Panc1 (cell line): ENCODE measurements at regions of chr7 and their contacts with region 1.

Region 1: DNA sequence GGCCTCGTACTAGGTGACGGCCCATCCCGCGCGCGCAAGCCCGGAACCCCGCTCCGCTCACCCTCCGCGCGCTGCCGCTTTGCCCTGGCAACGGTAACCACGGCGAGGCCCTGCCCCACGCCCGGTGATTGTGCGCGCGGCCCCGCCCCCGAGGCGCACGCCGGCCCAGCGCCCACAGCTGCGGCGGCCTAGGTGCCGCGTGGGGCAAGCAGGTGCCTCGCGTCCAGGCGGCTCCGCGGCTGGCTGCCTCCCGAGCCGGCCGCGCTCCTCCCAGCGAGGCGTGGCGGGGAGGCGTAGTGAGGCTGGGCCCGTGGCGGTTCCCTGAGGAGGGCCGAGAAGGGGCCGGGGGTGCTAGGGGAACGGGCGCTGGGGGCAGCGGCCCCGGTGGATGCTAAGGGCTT is at the start of gene SMKR1:
- DNase-seq: no peak
- ATAC-seq: peak; percentile 85
- H3K4me3 ChIP-seq: peak within 1 kb of the TSS; percentile 55 to 61
- H3K27ac ChIP-seq: no peak within 1 kb of the TSS
- H3K4me1 ChIP-seq: no peaks in the 10 kb centered on the region
- H3K27me3 ChIP-seq: no peaks in the 10 kb centered on the region
- CTCF ChIP-seq: no peak
- total RNA-seq, gene SMKR1: 1.4 TPM

Region 2: DNA sequence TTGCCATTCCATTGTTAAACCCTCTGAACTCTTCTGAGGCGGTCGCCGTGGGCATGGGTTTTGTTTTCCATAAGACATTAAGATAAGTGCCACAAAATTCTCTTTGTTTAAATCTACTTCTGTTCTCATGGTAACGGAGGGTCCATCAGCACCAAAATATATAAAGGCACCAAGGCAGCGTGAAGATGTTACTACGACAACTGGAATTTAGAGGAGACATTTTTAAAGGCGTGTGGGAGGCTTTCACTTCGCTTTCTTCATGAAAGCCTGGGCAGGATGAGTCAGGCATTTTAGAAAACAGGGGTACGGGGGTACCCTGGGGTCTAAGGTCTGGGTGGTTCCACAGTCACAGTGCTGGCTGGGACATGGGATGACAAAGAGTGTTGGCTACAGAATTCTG is 33.9 kb after region 1 on chr7:
- CTCF ChIA-PET with region 1: interaction called, 11 read pairs
- POLR2A ChIA-PET with region 1: interaction called, 15 read pairs
- in situ Hi-C with region 1: no loop called
- intact Hi-C with region 1: no loop called
- DNase-seq: no peak
- ATAC-seq: no peak
- H3K4me3 ChIP-seq: no peak overlapping the region
- H3K27ac ChIP-seq: no peak overlapping the region
- H3K4me1 ChIP-seq: no peaks in the 10 kb centered on the region
- H3K27me3 ChIP-seq: no peaks in the 10 kb centered on the region
- CTCF ChIP-seq: no peak

Region 3: GRCh38 chr7:129864042-129864441 is 361.7 kb after region 1 on chr7:
- CTCF ChIA-PET with region 1: no interaction called
- POLR2A ChIA-PET with region 1: interaction called, 16 read pairs
- in situ Hi-C with region 1: no loop called
- intact Hi-C with region 1: no loop called
- DNase-seq: no peak
- ATAC-seq: no peak
- H3K4me3 ChIP-seq: no peak overlapping the region
- H3K27ac ChIP-seq: no peak overlapping the region
- H3K4me1 ChIP-seq: peaks cover 10% of the 10 kb centered on the region
- H3K27me3 ChIP-seq: no peaks in the 10 kb centered on the region
- CTCF ChIP-seq: no peak